Heart left ventricle (tissue), 16 donors: ENCODE measurements at regions of chr10 and their contacts with region 1.

Region 1: DNA sequence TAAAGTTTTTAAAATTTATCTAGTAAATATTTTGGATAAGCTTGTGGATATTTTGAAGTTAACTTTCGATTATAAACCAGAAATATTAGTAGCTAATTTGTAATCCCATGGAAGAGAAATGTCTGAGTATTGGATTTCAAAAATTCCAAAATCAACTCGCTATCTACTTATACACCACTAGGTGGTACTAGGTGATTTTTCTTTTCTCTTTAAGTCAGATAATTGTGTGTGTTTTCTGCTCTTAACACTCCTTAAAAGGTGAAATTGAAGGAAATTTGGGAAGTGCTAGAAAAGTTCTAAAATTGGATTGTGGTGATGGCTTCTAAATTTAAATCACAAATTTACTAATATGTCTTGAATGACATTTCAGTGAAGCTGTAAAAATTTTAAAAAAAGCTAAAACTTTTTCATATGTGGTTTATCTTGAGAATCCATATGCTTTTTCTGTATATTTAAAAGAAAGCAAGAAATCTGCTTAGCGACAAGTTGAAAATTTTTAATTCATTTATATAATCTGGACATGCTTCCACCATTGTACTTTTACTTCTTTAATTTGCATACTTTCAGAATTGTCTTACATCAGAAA is 90.2 kb downstream of the IPMK start:
- DNase-seq: no peak
- ATAC-seq: no peak
- H3K4me3 ChIP-seq: no peak overlapping the region
- H3K27ac ChIP-seq: no peak overlapping the region
- H3K4me1 ChIP-seq: no peaks in the 10 kb centered on the region
- H3K27me3 ChIP-seq: no peaks in the 10 kb centered on the region
- CTCF ChIP-seq: peak; percentile 40 to 79 (median 68)
- POLR2A ChIP-seq: no peak

Region 2: GRCh38 chr10:58291538-58292174 is 114.2 kb after region 1 on chr10:
- intact Hi-C with region 1: loop called (anchors 1 to 5 kb)
- DNase-seq: peak in 1 of 5 donors; percentile 24
- ATAC-seq: peak; percentile 37 to 75 (median 70)
- H3K4me3 ChIP-seq: no peak overlapping the region
- H3K27ac ChIP-seq: no peak overlapping the region
- H3K4me1 ChIP-seq: no peaks in the 10 kb centered on the region
- H3K27me3 ChIP-seq: no peaks in the 10 kb centered on the region
- CTCF ChIP-seq: peak; percentile 60 to 83 (median 71)
- POLR2A ChIP-seq: no peak

Region 3: GRCh38 chr10:58393317-58393716 is 215.9 kb after region 1 on chr10:
- intact Hi-C with region 1: loop called in 3 of 10 experiments (anchors 10 kb)
- DNase-seq: no peak
- ATAC-seq: no peak
- H3K4me3 ChIP-seq: no peak overlapping the region
- H3K27ac ChIP-seq: no peak overlapping the region
- H3K4me1 ChIP-seq: no peaks in the 10 kb centered on the region
- H3K27me3 ChIP-seq: no peaks in the 10 kb centered on the region
- CTCF ChIP-seq: no peak
- POLR2A ChIP-seq: no peak

Region 4: GRCh38 chr10:58451193-58451889 is 273.9 kb after region 1 on chr10:
- intact Hi-C with region 1: no loop called
- DNase-seq: no peak
- ATAC-seq: no peak
- H3K4me3 ChIP-seq: no peak overlapping the region
- H3K27ac ChIP-seq: peak overlapping the region in 2 of 12 donors; percentile 30 to 45
- H3K4me1 ChIP-seq: peaks cover 0 to 31% (median 0%) of the 10 kb centered on the region in 12 donors
- H3K27me3 ChIP-seq: no peaks in the 10 kb centered on the region
- CTCF ChIP-seq: no peak
- POLR2A ChIP-seq: no peak